ENCODE measurements at regions of chr15 and their contacts with region 1.

Region 1: GRCh38 chr15:38252481-38253412 is at the start of gene SPRED1:
- DNase-seq: peak; percentile 69
- H3K4me3 ChIP-seq: peak within 1 kb of the TSS; percentile 86 to 90
- H3K27ac ChIP-seq: peak within 1 kb of the TSS; percentile 97 to 99
- H3K4me1 ChIP-seq: peaks cover 9% of the 10 kb centered on the region
- H3K27me3 ChIP-seq: no peaks in the 10 kb centered on the region
- CTCF ChIP-seq: no peak
- POLR2A ChIP-seq: no peak
- total RNA-seq, gene SPRED1: 12.9 to 14.2 TPM

Region 2: GRCh38 chr15:38072348-38073177 is 180.2 kb before region 1 on chr15:
- intact Hi-C with region 1: loop called (anchors 10 kb)
- DNase-seq: peak; percentile 78
- H3K4me3 ChIP-seq: peak overlapping the region; percentile 55 to 76
- H3K27ac ChIP-seq: peak overlapping the region; percentile 82 to 93
- H3K4me1 ChIP-seq: peaks cover 21% of the 10 kb centered on the region
- H3K27me3 ChIP-seq: no peaks in the 10 kb centered on the region
- CTCF ChIP-seq: peak in 1 of 3 experiments; percentile 5
- POLR2A ChIP-seq: no peak

Region 3: DNA sequence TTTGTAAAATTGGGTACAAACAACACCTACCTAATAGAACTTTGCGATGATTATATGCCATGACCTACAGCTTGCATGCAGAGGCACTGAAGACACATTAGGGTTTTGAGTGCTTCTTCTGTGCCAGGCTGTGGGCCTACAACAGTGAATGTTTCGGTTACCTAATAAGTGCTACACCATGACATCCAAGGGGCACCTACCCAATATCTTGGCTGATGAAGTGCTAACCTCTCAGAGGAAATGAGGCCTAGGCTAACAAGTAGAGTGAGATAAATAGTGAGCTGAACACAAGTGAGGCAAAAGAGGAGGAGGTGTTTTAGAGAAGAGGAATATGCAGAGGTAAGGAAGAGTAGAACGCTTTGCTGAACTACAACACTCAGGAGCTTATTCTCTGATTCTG is 324.1 kb after region 1 on chr15:
- intact Hi-C with region 1: no loop called
- DNase-seq: no peak
- H3K4me3 ChIP-seq: no peak overlapping the region
- H3K27ac ChIP-seq: no peak overlapping the region
- H3K4me1 ChIP-seq: no peaks in the 10 kb centered on the region
- H3K27me3 ChIP-seq: no peaks in the 10 kb centered on the region
- CTCF ChIP-seq: no peak
- POLR2A ChIP-seq: no peak